ENCODE measurements at regions of chr3 and their contacts with region 1.

Region 1: GRCh38 chr3:150603153-150603979 is at the start of gene SELENOT:
- DNase-seq: peak; percentile 97
- H3K4me3 ChIP-seq: peak within 1 kb of the TSS; percentile 80 to 85
- H3K27ac ChIP-seq: peak within 1 kb of the TSS; percentile 90 to 96
- H3K4me1 ChIP-seq: peaks cover 2 to 34% of the 10 kb centered on the region in 2 experiments
- H3K27me3 ChIP-seq: no peaks in the 10 kb centered on the region
- CTCF ChIP-seq: peak; percentile 46
- EP300 ChIP-seq: no peak
- RAD21 ChIP-seq: no peak
- polyA plus RNA-seq, gene SELENOT: 143 and 247 TPM in 2 replicates

Region 2: GRCh38 chr3:149507491-149508324 is 1095.7 kb before region 1 on chr3:
- CTCF ChIA-PET with region 1: no interaction called
- POLR2A ChIA-PET with region 1: no interaction called
- DNase-seq: no peak
- H3K4me3 ChIP-seq: no peak overlapping the region
- H3K27ac ChIP-seq: peak overlapping the region in 1 of 2 experiments; percentile 61; a peak in 2 of 4 replicates
- H3K4me1 ChIP-seq: peaks cover 0 to 21% of the 10 kb centered on the region in 2 experiments; a peak in 1 of 4 replicates
- H3K27me3 ChIP-seq: no peaks in the 10 kb centered on the region
- CTCF ChIP-seq: no peak
- EP300 ChIP-seq: no peak
- RAD21 ChIP-seq: no peak

Region 3: GRCh38 chr3:150546226-150547044 is 56.9 kb before region 1 on chr3 and contains the starts of genes EIF2A and SERP1:
- CTCF ChIA-PET with region 1: no interaction called
- POLR2A ChIA-PET with region 1: interaction called, 10 read pairs
- DNase-seq: peak; percentile 94
- H3K4me3 ChIP-seq: peak within 1 kb of the TSS; percentile 83 to 87
- H3K27ac ChIP-seq: peak within 1 kb of the TSS; percentile 95 to 98
- H3K4me1 ChIP-seq: peaks cover 5 to 8% of the 10 kb centered on the region in 2 experiments; a peak in 3 of 4 replicates
- H3K27me3 ChIP-seq: no peaks in the 10 kb centered on the region
- CTCF ChIP-seq: no peak
- EP300 ChIP-seq: peak in 1 of 2 experiments; percentile 12; a peak in 2 of 4 replicates
- RAD21 ChIP-seq: no peak
- polyA plus RNA-seq, gene EIF2A: 67.0 and 72.7 TPM in 2 replicates
- polyA plus RNA-seq, gene SERP1: 61.7 and 77.4 TPM in 2 replicates

Region 4: GRCh38 chr3:150703299-150704134 is 100.2 kb after region 1 on chr3 and contains the start of gene ERICH6:
- CTCF ChIA-PET with region 1: no interaction called
- POLR2A ChIA-PET with region 1: interaction called, 14 read pairs
- DNase-seq: peak; percentile 92
- H3K4me3 ChIP-seq: peak within 1 kb of the TSS; percentile 60 to 90
- H3K27ac ChIP-seq: peak within 1 kb of the TSS; percentile 72 to 77; a peak in 3 of 4 replicates
- H3K4me1 ChIP-seq: peaks cover 0 to 2% of the 10 kb centered on the region in 2 experiments; a peak in 2 of 4 replicates
- H3K27me3 ChIP-seq: no peaks in the 10 kb centered on the region
- CTCF ChIP-seq: no peak
- EP300 ChIP-seq: no peak
- RAD21 ChIP-seq: no peak
- polyA plus RNA-seq, gene ERICH6: 0.08 and 0.21 TPM in 2 replicates

Region 5: DNA sequence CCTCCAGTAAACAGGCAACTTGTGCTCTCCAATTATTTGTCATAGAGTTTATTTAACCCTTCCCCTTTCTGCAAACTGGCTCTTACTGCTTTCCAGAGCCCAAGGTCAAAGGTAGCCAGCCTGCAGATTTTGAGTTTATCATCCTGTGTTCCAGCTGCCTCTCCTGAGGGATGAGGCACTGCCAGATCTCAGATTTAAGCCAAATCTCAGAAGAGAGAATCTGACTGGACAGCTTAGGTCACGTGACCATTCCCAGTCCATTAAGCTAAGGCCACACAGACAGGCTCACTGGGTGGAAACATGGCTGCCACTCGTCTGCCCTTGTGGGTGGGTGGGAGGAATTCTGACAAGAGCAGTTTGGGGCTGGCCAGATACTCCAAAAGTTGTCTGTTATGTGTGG is 168.2 kb after region 1 on chr3:
- CTCF ChIA-PET with region 1: no interaction called
- POLR2A ChIA-PET with region 1: no interaction called
- DNase-seq: peak; percentile 38
- H3K4me3 ChIP-seq: no peak overlapping the region
- H3K27ac ChIP-seq: no peak overlapping the region
- H3K4me1 ChIP-seq: peaks cover 0 to 4% of the 10 kb centered on the region in 2 experiments; a peak in 2 of 4 replicates
- H3K27me3 ChIP-seq: no peaks in the 10 kb centered on the region
- CTCF ChIP-seq: no peak
- EP300 ChIP-seq: no peak
- RAD21 ChIP-seq: no peak